Right lobe of liver (tissue), 6 donors: ENCODE measurements at regions of chr5 and their contacts with region 1.

Region 1: GRCh38 chr5:112757468-112758208 is 20.0 kb downstream of the APC start:
- DNase-seq: no peak
- ATAC-seq: peak; percentile 92 to 97 (median 92)
- H3K4me3 ChIP-seq: no peak overlapping the region
- H3K27ac ChIP-seq: peak overlapping the region in 1 of 3 donors; percentile 30
- H3K4me1 ChIP-seq: no peaks in the 10 kb centered on the region
- H3K27me3 ChIP-seq: no peaks in the 10 kb centered on the region
- CTCF ChIP-seq: peak; percentile 80 to 85 (median 82)
- POLR2A ChIP-seq: no peak

Region 2: DNA sequence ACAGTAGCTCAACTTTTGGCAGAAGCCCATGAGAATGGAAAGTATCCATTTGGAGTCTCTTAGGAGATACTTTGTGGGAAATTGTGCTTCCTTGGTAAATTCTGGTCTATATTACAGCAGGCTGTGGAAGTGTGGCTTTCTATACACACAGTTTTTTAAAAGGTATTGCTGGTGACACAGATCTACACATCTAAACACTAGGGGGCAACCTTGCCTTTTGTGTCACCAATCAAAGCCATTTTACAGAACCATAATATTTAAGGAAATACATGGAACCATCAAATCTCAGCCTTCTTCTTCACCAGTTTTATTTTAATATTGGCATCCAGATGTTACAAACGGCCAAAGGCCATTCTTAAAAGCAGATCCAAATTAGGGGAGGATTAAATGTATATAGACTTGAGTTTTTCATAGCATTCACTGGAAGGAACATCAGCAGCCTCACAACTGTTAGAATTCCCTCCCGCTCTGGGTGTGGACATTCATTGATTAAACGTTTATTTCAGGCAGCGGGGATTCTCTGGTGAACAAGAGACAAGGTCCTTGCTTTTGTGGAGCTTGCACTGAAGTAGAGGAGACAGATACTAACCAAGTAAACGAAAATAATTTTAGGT is 206.1 kb before region 1 on chr5:
- intact Hi-C with region 1: loop called (anchors 5 kb)
- DNase-seq: no peak
- ATAC-seq: peak; percentile 85 to 94 (median 87)
- H3K4me3 ChIP-seq: no peak overlapping the region
- H3K27ac ChIP-seq: no peak overlapping the region
- H3K4me1 ChIP-seq: no peaks in the 10 kb centered on the region
- H3K27me3 ChIP-seq: no peaks in the 10 kb centered on the region
- CTCF ChIP-seq: peak; percentile 71 to 90 (median 78)
- POLR2A ChIP-seq: no peak